Activated CD4-positive, alpha-beta memory T cell treated with anti-CD3 and anti-CD28 coated beads for 36 hours (primary cell): ENCODE measurements at regions of chr3 and their contacts with region 1.

Region 1: GRCh38 chr3:187802928-187803259 is 57.6 kb upstream of the BCL6 start:
- DNase-seq: peak; percentile 89
- H3K4me3 Mint-ChIP-seq: peak overlapping the region; percentile 54
- H3K27ac Mint-ChIP-seq: peak overlapping the region; percentile 95
- H3K4me1 Mint-ChIP-seq: peaks cover 96% of the 10 kb centered on the region
- H3K27me3 Mint-ChIP-seq: no peaks in the 10 kb centered on the region

Region 2: GRCh38 chr3:187770224-187770623 is 32.7 kb before region 1 on chr3:
- CTCF ChIA-PET with region 1: interaction called, 4 read pairs
- POLR2A ChIA-PET with region 1: no interaction called
- intact Hi-C with region 1: loop called (anchors 1 kb)
- DNase-seq: peak; percentile 63
- H3K4me3 Mint-ChIP-seq: peak overlapping the region; percentile 20
- H3K27ac Mint-ChIP-seq: peak overlapping the region; percentile 73
- H3K4me1 Mint-ChIP-seq: peaks cover 43% of the 10 kb centered on the region
- H3K27me3 Mint-ChIP-seq: no peaks in the 10 kb centered on the region

Region 3: DNA sequence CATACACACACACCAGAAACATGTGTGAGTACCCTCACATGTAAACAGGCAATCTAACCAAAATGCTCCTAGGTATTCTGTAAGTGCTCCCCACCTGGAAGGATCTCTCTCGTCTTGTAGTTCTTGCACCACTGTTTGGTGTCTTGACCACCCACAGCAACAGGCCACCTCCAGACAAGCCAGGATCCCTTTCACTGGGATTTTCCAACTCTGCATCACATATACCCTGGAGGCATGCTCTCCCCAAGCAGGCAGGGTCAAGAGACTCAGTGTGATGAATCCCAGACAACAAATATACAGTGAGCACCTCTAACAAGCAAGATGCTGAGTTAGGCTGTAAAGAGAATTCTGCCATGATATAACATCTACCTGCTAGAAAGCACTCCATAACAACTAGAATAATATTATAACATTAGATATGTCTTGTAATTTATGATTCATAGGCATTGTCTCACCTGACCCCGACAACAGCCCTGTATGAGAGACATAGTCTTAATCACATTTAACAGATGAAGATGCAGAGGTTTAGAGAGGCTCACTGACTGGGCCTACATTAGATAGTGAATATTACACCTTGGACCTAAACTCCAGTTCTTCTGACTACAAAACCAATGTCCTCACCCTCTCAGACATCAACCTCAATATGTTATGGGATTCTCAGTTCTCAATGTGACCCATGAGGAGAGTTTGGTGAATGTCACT is 18.9 kb after region 1 on chr3:
- CTCF ChIA-PET with region 1: no interaction called
- POLR2A ChIA-PET with region 1: no interaction called
- intact Hi-C with region 1: no loop called
- DNase-seq: no peak
- H3K4me3 Mint-ChIP-seq: no peak overlapping the region
- H3K27ac Mint-ChIP-seq: no peak overlapping the region
- H3K4me1 Mint-ChIP-seq: peaks cover 13% of the 10 kb centered on the region
- H3K27me3 Mint-ChIP-seq: no peaks in the 10 kb centered on the region

Region 4: DNA sequence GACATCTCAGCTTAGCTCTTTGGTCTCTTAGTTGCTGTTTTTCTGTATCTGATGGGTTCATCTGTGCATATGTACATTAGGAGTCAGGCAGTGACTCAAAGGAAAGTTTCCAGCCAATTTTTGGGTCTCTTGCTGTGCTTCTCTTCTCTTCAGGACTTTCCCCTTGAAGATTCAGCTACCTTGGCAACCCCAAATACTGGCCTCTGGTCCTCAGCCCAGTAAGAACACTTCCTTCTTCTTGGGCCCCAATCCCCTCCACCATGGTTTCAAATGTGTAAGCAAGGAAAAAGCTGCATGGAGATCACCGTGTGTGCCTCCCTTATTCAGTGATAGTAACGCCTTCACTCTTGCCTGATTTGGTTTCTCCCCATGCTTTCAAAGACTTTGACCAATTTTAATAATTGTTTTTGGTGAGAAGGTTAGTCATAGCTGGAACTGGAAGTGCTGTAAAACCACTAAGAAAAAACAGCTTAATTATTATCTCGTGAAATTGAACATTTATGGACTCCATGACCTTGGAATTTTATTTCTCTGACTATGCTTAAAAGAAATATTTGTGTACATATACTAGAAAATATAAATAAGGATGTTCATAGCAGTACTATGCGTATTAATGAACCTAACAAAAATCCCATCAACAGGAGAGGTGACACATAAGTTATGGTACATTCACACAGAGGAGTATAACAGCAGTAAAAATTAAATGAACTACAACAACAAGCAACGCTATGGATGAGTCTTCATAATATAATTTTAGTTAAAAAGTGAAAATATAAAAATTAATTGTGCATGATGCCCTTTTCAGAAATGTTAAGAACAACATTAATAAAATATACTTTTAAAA is 67.7 kb after region 1 on chr3:
- CTCF ChIA-PET with region 1: interaction called, 4 read pairs
- POLR2A ChIA-PET with region 1: interaction called, 5 read pairs
- intact Hi-C with region 1: loop called (anchors 2 kb)
- DNase-seq: peak; percentile 45
- H3K4me3 Mint-ChIP-seq: no peak overlapping the region
- H3K27ac Mint-ChIP-seq: peak overlapping the region; percentile 40
- H3K4me1 Mint-ChIP-seq: peaks cover 22% of the 10 kb centered on the region
- H3K27me3 Mint-ChIP-seq: no peaks in the 10 kb centered on the region

Region 5: DNA sequence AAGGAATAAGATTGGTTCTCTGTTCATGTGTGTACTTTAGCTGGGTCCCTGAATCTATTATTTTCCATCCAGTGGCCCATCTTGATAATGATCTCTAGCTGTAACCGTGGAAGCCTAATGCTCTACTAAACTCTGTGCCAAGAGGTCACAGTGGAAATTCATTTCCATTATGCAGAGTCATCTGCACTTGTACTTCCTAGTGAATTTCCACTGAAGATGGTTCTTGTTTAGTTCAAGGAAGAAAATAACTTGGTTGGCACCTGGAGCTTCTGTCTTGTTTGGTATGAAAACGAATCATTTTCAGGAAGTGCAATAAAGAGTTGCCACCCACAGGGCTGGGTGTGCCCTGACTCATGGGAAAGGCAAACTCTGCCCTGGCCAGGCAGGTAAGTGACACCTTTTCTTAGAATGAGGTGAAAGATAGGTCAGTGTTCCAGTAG is 361.4 kb after region 1 on chr3:
- CTCF ChIA-PET with region 1: no interaction called
- POLR2A ChIA-PET with region 1: no interaction called
- intact Hi-C with region 1: loop called (anchors 1 kb)
- DNase-seq: peak; percentile 59
- H3K4me3 Mint-ChIP-seq: no peak overlapping the region
- H3K27ac Mint-ChIP-seq: peak overlapping the region; percentile 76
- H3K4me1 Mint-ChIP-seq: peaks cover 62% of the 10 kb centered on the region
- H3K27me3 Mint-ChIP-seq: no peaks in the 10 kb centered on the region

Region 6: GRCh38 chr3:188339410-188340295 is 536.8 kb after region 1 on chr3:
- CTCF ChIA-PET with region 1: no interaction called
- POLR2A ChIA-PET with region 1: interaction called, 3 read pairs
- intact Hi-C with region 1: loop called (anchors 2 kb)
- DNase-seq: peak; percentile 75
- H3K4me3 Mint-ChIP-seq: peak overlapping the region; percentile 68
- H3K27ac Mint-ChIP-seq: peak overlapping the region; percentile 93
- H3K4me1 Mint-ChIP-seq: peaks cover 44% of the 10 kb centered on the region
- H3K27me3 Mint-ChIP-seq: peaks cover 2% of the 10 kb centered on the region

Region 7: GRCh38 chr3:189041482-189042090 is 1238.7 kb after region 1 on chr3:
- CTCF ChIA-PET with region 1: no interaction called
- POLR2A ChIA-PET with region 1: no interaction called
- intact Hi-C with region 1: loop called (anchors 10 kb)
- DNase-seq: peak; percentile 86
- H3K4me3 Mint-ChIP-seq: no peak overlapping the region
- H3K27ac Mint-ChIP-seq: peak overlapping the region; percentile 23
- H3K4me1 Mint-ChIP-seq: peaks cover 37% of the 10 kb centered on the region
- H3K27me3 Mint-ChIP-seq: no peaks in the 10 kb centered on the region